IMR-90 (cell line): ENCODE measurements at regions of chr14 and their contacts with region 1.

Region 1: DNA sequence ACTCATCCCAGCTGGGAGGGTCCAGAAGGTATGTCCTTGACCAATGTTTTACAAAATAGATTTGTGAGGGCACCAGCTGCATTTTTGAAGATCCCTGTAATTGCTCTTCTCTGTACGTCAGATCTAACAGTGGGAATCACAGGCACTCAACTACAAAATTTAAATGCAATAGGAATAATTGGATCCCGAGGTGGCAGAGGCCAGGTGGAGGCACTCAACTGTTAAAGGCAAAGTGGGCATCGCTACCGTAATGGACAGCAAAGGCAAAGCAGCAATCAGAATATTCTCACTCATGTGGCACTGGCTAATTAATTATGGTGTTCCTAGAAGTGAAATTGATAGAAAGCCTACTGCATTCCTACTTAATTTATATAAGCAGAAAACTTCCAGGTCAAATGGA is 27.9 kb upstream of the PSMC1 start:
- DNase-seq: no peak
- ATAC-seq: no peak
- H3K4me3 ChIP-seq: no peak overlapping the region
- H3K27ac ChIP-seq: no peak overlapping the region
- H3K4me1 ChIP-seq: no peaks in the 10 kb centered on the region
- H3K27me3 ChIP-seq: peaks cover 1% of the 10 kb centered on the region
- CTCF ChIP-seq: no peak
- POLR2A ChIP-seq: no peak
- RAD21 ChIP-seq: no peak

Region 2: DNA sequence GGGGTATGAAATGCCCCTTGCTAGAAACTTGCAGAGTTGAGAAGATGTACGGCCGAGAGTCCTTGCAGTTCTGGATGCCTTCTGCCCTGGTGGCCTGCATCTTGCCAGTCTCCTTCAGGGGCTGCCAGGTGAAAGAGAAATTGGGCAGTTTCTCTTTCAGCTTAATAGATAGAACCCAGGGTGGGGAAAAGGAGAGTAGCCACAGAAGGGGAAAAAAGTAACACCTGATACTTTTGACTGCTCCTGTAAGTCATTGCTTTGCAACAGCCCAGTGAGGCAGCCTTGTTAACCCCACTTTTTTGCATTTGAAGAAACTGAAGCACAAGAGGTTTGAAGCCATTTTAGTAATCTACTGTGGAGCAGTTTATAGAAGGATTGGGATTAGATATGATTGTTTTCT is 245.1 kb before region 1 on chr14:
- CTCF ChIA-PET with region 1: no interaction called
- POLR2A ChIA-PET with region 1: no interaction called
- dilution Hi-C with region 1: no loop called
- in situ Hi-C with region 1: loop called (anchors 10 kb)
- intact Hi-C with region 1: no loop called
- DNase-seq: no peak
- ATAC-seq: no peak
- H3K4me3 ChIP-seq: no peak overlapping the region
- H3K27ac ChIP-seq: no peak overlapping the region
- H3K4me1 ChIP-seq: peaks cover 2% of the 10 kb centered on the region; the same call in 1 of the 2 replicates
- H3K27me3 ChIP-seq: no peaks in the 10 kb centered on the region
- CTCF ChIP-seq: no peak
- POLR2A ChIP-seq: no peak
- RAD21 ChIP-seq: no peak